Activated B cell treated with CpG ODN at 0.5 μM for 24 hours (primary cell): ENCODE measurements at regions of chr16 and their contacts with region 1.

Region 1: DNA sequence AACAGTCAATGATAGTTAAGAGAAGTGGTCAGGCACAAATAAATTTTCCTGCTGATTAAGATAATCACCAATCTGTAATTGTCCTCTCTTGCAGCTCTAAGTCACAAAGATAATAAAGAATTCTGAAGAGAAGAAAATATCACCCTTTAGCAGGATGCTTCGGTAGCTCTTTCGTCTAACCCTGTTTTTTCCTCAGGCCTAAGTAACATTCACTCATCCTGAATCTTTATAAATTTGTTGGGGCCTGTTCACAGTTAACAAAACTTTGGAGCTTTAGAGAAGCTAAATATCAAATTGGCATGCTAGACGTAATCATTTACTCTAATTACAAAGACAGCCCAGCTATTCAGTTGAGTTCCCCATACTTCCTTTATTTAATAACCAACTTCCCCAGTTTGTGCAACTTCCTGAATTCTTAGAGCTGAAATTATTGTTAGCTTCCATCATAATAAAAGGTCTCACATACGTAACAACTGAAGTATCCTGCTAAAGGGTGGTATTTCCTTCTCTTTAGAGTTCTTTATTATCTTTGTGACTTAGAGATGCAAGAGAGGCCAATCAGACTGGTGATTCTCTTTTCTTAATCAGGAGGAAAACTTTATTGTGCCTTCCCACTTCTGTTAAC is 118.6 kb downstream of the TANGO6 start:
- DNase-seq: no peak
- ATAC-seq: no peak
- H3K4me3 Mint-ChIP-seq: no peak overlapping the region
- H3K27ac Mint-ChIP-seq: no peak overlapping the region
- H3K4me1 Mint-ChIP-seq: peaks cover 2% of the 10 kb centered on the region
- H3K27me3 Mint-ChIP-seq: no peaks in the 10 kb centered on the region
- CTCF ChIP-seq: no peak

Region 2: GRCh38 chr16:68948230-68948910 is 13.5 kb before region 1 on chr16:
- CTCF ChIA-PET with region 1: no interaction called
- POLR2A ChIA-PET with region 1: no interaction called
- intact Hi-C with region 1: no loop called
- DNase-seq: no peak
- ATAC-seq: no peak
- H3K4me3 Mint-ChIP-seq: no peak overlapping the region
- H3K27ac Mint-ChIP-seq: no peak overlapping the region
- H3K4me1 Mint-ChIP-seq: no peaks in the 10 kb centered on the region
- H3K27me3 Mint-ChIP-seq: no peaks in the 10 kb centered on the region
- CTCF ChIP-seq: no peak

Region 3: DNA sequence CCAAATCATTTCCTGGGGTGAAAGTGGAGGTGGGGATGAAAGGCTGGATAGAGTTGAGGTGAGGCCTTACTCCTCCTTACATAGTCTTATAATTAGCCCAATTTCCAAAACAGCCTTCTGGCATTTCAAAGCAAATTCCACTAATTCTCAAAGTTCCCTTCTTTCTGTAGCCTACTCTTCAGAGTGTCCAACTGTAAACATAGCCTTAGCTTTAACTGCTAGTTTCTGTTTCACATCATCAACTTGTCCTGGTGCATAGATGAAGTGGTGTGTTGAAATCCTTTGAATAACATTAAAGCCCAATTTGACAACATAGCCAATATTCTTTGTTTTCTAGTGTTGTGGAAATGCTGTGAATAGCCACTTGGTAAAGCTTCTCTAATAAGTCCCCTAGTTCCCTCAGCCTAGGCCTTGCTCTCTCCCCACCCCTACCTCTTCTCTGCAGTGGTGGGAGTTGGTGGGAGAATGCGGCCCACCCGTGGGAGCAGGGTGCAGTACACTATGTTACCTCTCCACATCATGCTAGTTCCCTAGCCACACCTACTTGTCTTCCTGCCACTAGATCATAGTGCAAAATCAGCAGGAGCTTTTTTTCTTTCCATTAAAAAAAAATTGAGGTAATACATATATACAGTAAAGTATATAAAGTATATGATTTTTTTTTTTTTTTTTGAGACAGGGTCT is 16.5 kb after region 1 on chr16:
- CTCF ChIA-PET with region 1: no interaction called
- POLR2A ChIA-PET with region 1: no interaction called
- intact Hi-C with region 1: no loop called
- DNase-seq: no peak
- ATAC-seq: no peak
- H3K4me3 Mint-ChIP-seq: no peak overlapping the region
- H3K27ac Mint-ChIP-seq: no peak overlapping the region
- H3K4me1 Mint-ChIP-seq: no peaks in the 10 kb centered on the region
- H3K27me3 Mint-ChIP-seq: no peaks in the 10 kb centered on the region
- CTCF ChIP-seq: no peak

Region 4: GRCh38 chr16:69019811-69020210 is 57.9 kb after region 1 on chr16:
- CTCF ChIA-PET with region 1: no interaction called
- POLR2A ChIA-PET with region 1: interaction called, 11 read pairs
- intact Hi-C with region 1: no loop called
- DNase-seq: no peak
- ATAC-seq: no peak
- H3K4me3 Mint-ChIP-seq: no peak overlapping the region
- H3K27ac Mint-ChIP-seq: no peak overlapping the region
- H3K4me1 Mint-ChIP-seq: no peaks in the 10 kb centered on the region
- H3K27me3 Mint-ChIP-seq: no peaks in the 10 kb centered on the region
- CTCF ChIP-seq: no peak

Region 5: DNA sequence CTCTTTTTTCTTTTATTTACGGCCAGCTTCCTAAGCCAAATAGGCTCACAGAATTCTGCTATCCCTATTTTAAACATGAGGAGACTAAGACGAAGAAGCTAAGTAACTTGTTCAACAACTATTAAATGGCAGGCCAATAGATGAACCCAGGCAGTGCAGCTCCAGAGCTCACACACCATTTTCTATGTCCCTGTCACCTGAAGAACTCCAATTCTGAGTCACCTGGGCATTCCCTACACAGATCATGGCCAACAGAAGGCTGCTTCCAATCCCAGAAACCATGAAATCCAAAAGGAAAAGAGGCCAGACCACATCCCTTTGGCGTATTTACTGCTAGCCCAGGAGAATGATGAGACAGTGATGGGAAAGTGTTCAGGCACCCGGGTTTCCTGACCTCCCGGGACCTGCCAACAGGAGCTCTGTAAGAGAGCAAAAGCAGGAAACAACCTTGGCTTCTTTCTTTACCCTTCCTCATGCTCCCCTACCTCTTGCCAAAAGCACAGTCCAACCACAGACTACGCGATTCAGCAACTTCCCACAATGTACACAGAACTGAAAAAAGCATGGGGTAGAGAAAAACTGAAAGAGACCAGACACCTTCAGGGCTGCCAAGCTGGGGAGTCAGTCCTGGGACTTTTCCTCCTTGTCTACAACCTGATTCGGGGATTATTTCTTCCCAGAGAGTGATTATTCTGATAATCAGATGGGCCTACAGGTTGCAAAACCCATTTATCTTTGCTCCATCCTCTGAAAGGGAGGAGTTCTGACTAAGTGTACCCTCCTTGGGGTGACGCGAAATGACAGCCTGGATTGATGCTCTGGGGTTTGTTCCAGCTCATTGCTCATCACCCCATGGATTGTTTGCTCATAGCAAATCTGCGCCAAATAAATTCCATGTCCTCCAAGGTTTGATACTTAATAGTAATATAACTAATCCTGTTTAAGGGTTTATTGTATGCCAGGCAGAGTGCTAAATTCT is 95.8 kb after region 1 on chr16:
- CTCF ChIA-PET with region 1: no interaction called
- POLR2A ChIA-PET with region 1: no interaction called
- intact Hi-C with region 1: no loop called
- DNase-seq: no peak
- ATAC-seq: no peak
- H3K4me3 Mint-ChIP-seq: no peak overlapping the region
- H3K27ac Mint-ChIP-seq: no peak overlapping the region
- H3K4me1 Mint-ChIP-seq: no peaks in the 10 kb centered on the region
- H3K27me3 Mint-ChIP-seq: no peaks in the 10 kb centered on the region
- CTCF ChIP-seq: no peak